Psoas muscle (tissue), 8 donors: ENCODE measurements at regions of chr16 and their contacts with region 1.

Region 1: GRCh38 chr16:1378804-1379303 is 27.1 kb downstream of the GNPTG start:
- DNase-seq: peak; percentile 96 to 98
- ATAC-seq: peak; percentile 88 to 92 (median 90)
- H3K4me3 ChIP-seq: peak overlapping the region; percentile 73
- H3K27ac ChIP-seq: peak overlapping the region; percentile 98
- H3K4me1 ChIP-seq: peaks cover 10% of the 10 kb centered on the region
- H3K27me3 ChIP-seq: no peaks in the 10 kb centered on the region
- CTCF ChIP-seq: no peak

Region 2: GRCh38 chr16:1258906-1259759 is 119.7 kb before region 1 on chr16:
- intact Hi-C with region 1: no loop called
- DNase-seq: no peak
- ATAC-seq: no peak
- H3K4me3 ChIP-seq: no peak overlapping the region
- H3K27ac ChIP-seq: no peak overlapping the region
- H3K4me1 ChIP-seq: no peaks in the 10 kb centered on the region
- H3K27me3 ChIP-seq: peaks cover 0 to 47% (median 16%) of the 10 kb centered on the region in 3 donors
- CTCF ChIP-seq: no peak

Region 3: GRCh38 chr16:1296688-1297412 is 82.0 kb before region 1 on chr16:
- intact Hi-C with region 1: no loop called
- DNase-seq: no peak
- ATAC-seq: peak; percentile 92 to 95 (median 94)
- H3K4me3 ChIP-seq: peak overlapping the region; percentile 4
- H3K27ac ChIP-seq: peak overlapping the region; percentile 90
- H3K4me1 ChIP-seq: peaks cover 15% of the 10 kb centered on the region
- H3K27me3 ChIP-seq: peaks cover 0 to 46% (median 13%) of the 10 kb centered on the region in 3 donors
- CTCF ChIP-seq: no peak

Region 4: DNA sequence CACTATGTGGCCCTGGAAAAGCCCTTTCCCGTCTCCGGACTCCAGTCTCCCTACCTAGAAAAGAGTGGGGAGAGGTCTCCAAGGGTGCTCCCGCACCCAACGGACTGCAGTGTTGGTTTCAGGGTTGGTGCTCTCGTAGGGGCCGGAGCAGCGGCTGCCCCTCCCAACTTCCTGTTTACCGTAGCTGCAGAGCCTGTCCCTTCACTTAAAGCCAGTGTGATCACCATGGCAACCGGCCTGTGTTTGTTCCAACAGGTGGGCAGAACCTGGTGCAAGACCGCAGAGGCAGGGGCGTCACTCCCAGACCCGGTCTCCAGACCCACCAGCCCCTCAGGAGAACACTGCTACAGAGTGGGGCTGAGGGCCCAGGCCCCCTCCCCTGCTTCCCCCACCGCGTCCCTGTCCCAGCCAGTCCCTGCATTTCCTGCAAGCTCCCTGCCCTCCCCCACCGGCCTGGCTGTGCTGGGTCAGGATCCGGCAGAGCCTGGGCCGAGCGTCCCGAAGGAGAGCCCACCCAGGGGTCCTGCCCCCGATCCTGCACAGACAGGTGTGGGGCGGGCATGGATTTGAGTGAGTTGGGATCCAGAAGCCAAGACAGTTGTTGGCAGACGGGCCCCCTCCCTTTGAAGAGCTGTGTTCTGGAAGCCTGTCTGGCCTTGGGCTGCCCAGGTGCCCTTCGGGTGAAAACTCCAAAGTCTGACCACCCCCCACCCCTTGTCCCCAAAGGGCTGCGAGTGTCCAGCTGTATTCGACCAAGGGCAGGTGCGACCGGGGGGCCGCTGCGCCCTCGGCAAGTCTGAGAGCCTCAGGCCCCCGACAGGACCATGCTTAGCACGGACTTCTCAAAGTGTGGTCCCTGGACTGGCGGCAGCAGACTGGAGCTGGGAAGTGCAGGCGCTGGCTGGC is 46.9 kb before region 1 on chr16:
- intact Hi-C with region 1: no loop called
- DNase-seq: peak; percentile 56 to 80
- ATAC-seq: peak in 1 of 4 donors; percentile 42
- H3K4me3 ChIP-seq: peak overlapping the region; percentile 59
- H3K27ac ChIP-seq: no peak overlapping the region
- H3K4me1 ChIP-seq: no peaks in the 10 kb centered on the region
- H3K27me3 ChIP-seq: peaks cover 0 to 30% (median 25%) of the 10 kb centered on the region in 3 donors
- CTCF ChIP-seq: no peak

Region 5: DNA sequence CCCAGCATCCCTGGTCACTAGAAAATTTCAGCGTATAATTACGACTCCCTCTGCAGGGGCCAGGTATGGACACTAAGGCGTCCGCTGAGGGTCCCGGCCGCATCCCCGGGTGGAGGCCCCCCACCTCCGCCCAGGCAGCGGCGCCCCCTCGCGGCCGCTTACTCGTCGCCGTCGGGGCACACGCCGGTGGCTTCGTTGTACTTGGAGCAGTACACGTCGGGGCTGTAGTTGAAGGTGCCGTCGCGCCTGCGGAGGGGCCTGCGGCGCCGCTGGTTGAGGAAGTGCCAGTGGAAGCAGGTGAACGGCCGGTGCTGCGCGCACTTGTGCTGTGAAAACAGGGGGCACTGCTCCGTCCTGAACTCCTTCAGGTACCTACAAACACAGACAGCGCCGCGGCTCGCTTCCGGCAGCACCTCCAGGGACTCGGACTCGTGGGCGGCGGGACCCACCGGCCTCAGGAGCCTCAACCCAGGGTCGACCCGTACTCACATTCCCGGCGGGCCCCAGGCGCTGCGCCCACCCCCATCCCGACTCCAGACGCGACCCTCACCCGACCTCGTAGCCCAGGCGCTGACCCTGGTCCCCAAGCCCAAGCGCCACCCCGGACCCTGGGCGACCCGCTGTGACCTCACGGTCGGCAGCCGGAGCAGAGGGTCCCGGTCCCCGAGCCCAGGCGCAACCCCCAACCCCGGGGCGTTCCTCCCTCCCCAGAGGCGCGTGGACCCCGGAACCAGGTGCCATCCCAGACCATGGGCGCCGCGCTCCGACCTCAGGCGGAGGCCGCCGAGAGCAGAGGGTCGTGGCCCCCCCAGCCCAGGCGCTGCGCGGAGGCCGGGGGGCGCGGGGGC is 35.1 kb after region 1 on chr16:
- intact Hi-C with region 1: loop called in 1 of 2 experiments (anchors 5 kb)
- DNase-seq: peak; percentile 60 to 77
- ATAC-seq: peak; percentile 55 to 71 (median 66)
- H3K4me3 ChIP-seq: peak overlapping the region; percentile 92
- H3K27ac ChIP-seq: peak overlapping the region; percentile 80
- H3K4me1 ChIP-seq: peaks cover 12% of the 10 kb centered on the region
- H3K27me3 ChIP-seq: no peaks in the 10 kb centered on the region
- CTCF ChIP-seq: peak; percentile 58

Region 6: DNA sequence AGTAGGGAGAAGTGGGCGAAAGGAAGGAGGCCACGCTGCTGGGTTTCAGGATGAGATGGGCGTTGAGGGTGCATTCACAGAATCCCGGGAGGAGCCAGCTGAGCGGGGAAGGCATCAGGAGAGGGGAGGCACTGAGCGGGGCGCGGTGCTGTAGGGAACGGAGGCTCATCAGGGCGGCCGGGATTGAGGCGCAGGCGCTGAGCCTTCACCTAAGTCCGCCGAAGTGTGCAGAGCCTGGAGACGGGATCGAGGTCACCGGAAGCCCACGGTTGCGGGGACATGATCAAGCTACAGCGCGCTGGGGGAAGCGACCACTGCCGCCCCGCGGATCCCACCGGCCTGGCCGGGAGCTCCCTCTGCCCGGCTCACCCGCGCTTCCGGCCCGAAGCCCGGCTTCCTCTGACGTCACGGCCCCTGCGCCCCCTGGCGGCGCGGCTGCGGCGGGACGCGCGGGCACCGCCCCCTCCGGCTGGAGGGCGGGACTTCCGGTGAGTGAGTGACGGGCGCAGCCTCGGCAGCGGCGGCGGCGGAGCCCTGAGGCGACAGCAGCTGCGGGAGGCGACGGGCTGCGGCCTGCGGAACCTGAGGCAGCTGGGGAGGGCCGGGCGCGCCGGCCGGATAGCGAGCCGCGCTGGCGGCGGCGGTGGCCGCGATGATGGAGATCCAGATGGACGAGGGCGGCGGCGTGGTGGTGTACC is 327.0 kb after region 1 on chr16 and contains the start of gene MAPK8IP3:
- intact Hi-C with region 1: loop called in 1 of 2 experiments (anchors 5 kb)
- DNase-seq: peak; percentile 91 to 96
- ATAC-seq: peak; percentile 91 to 93 (median 92)
- H3K4me3 ChIP-seq: peak within 1 kb of the TSS; percentile 96
- H3K27ac ChIP-seq: peak within 1 kb of the TSS; percentile 99
- H3K4me1 ChIP-seq: peaks cover 29% of the 10 kb centered on the region
- H3K27me3 ChIP-seq: no peaks in the 10 kb centered on the region
- CTCF ChIP-seq: peak; percentile 98
- total RNA-seq, gene MAPK8IP3: 22.6 to 31.6 (median 24.9) TPM